ENCODE measurements at regions of chr4 and their contacts with region 1.

Region 1: GRCh38 chr4:145732895-145733880 is 53.2 kb downstream of the C4orf51 start:
- DNase-seq: peak; percentile 91
- H3K4me3 Mint-ChIP-seq: peak overlapping the region; percentile 69
- H3K27ac Mint-ChIP-seq: peak overlapping the region; percentile 98
- H3K4me1 Mint-ChIP-seq: peaks cover 41% of the 10 kb centered on the region
- H3K27me3 Mint-ChIP-seq: no peaks in the 10 kb centered on the region
- CTCF ChIP-seq: no peak

Region 2: DNA sequence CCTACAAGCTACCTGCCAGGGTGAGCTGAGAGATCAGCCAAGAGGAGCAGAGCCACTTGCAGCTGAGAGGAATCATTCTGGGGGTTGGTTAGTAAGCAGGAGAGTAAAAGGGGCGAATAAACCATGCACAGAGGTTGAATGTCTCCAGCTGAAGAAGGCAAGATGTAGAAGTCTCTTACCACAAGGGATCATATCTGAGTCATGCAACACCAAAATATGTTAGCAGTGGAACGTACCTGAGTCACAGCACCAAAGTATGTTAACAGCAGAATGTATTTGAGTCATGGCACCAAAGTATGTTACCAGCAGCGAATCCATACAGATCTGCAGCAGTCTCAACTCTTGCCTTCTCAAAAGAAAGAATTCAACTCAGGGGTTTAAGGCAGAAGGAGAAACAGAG is 23.3 kb before region 1 on chr4:
- CTCF ChIA-PET with region 1: no interaction called
- POLR2A ChIA-PET with region 1: interaction called, 16 read pairs
- intact Hi-C with region 1: no loop called
- DNase-seq: peak; percentile 83
- H3K4me3 Mint-ChIP-seq: no peak overlapping the region
- H3K27ac Mint-ChIP-seq: no peak overlapping the region
- H3K4me1 Mint-ChIP-seq: peaks cover 18% of the 10 kb centered on the region
- H3K27me3 Mint-ChIP-seq: no peaks in the 10 kb centered on the region
- CTCF ChIP-seq: no peak

Region 3: GRCh38 chr4:145808021-145808650 is 74.9 kb after region 1 on chr4:
- CTCF ChIA-PET with region 1: interaction called, 5 read pairs
- POLR2A ChIA-PET with region 1: interaction called, 54 read pairs
- intact Hi-C with region 1: loop called (anchors 1 kb)
- DNase-seq: peak; percentile 97
- H3K4me3 Mint-ChIP-seq: peak overlapping the region; percentile 41
- H3K27ac Mint-ChIP-seq: peak overlapping the region; percentile 95
- H3K4me1 Mint-ChIP-seq: peaks cover 32% of the 10 kb centered on the region
- H3K27me3 Mint-ChIP-seq: no peaks in the 10 kb centered on the region
- CTCF ChIP-seq: no peak

Region 4: DNA sequence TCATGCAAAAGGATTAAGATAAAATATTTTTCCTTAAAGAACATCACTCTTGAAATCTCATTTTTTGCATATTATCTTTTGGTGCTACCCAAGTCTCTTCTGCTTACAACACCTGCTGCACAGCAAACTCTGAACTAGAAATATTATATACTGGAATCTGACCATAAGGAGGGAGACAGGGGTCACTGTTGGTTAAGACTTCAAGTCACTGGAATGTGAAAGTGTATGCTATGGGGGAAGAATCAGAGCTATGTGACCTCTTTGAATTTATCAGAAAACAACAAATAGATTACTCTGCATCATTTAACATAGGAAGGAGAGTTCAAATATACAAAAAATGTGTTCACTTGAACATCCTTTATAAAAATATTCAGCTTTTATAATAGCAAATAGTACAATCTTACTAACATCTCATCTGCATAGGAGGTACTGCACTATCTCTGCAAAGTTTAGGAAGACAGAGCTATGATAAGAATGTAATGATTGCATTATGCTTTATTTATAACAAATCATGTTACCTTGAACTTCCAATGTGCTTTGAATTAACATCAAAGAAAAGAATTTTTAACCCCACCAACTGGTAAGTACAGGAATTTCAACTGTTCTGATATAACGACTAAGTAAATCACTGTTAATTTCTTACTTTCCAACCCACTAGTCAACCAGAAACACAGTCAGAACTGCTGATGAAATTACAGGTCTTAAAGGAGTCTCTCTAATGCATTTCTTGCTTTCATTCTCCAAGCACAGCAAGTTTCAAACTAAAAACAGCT is 135.6 kb after region 1 on chr4:
- CTCF ChIA-PET with region 1: no interaction called
- POLR2A ChIA-PET with region 1: no interaction called
- intact Hi-C with region 1: loop called (anchors 5 kb)
- DNase-seq: no peak
- H3K4me3 Mint-ChIP-seq: no peak overlapping the region
- H3K27ac Mint-ChIP-seq: no peak overlapping the region
- H3K4me1 Mint-ChIP-seq: peaks cover 6% of the 10 kb centered on the region
- H3K27me3 Mint-ChIP-seq: no peaks in the 10 kb centered on the region
- CTCF ChIP-seq: peak; percentile 18

Region 5: GRCh38 chr4:145887241-145887991 is 154.2 kb after region 1 on chr4:
- CTCF ChIA-PET with region 1: no interaction called
- POLR2A ChIA-PET with region 1: interaction called, 6 read pairs
- intact Hi-C with region 1: loop called (anchors 5 kb)
- DNase-seq: no peak
- H3K4me3 Mint-ChIP-seq: no peak overlapping the region
- H3K27ac Mint-ChIP-seq: no peak overlapping the region
- H3K4me1 Mint-ChIP-seq: peaks cover 2% of the 10 kb centered on the region
- H3K27me3 Mint-ChIP-seq: no peaks in the 10 kb centered on the region
- CTCF ChIP-seq: no peak

Region 6: DNA sequence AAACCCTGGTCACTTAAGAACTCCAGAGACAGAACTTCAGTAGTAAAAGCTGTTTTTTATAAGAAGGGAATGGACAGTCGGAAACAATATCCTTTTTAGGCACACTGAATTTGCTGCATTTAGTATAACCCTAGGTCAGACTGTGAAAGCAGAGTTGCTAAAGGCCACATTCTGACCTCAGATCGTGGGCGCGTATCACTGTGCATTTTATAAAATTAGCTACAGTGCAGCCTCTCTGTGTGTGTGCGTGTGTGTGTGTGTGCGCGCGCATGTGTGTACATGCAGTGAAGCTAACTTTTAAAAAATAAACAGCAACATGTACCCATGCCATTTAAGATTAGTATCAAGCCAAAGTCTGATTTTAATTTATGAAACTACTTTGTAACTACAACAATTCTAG is 197.4 kb after region 1 on chr4:
- CTCF ChIA-PET with region 1: no interaction called
- POLR2A ChIA-PET with region 1: interaction called, 12 read pairs
- intact Hi-C with region 1: no loop called
- DNase-seq: no peak
- H3K4me3 Mint-ChIP-seq: no peak overlapping the region
- H3K27ac Mint-ChIP-seq: no peak overlapping the region
- H3K4me1 Mint-ChIP-seq: peaks cover 18% of the 10 kb centered on the region
- H3K27me3 Mint-ChIP-seq: no peaks in the 10 kb centered on the region
- CTCF ChIP-seq: no peak

Region 7: GRCh38 chr4:145936142-145936996 is 203.2 kb after region 1 on chr4:
- CTCF ChIA-PET with region 1: interaction called, 3 read pairs
- POLR2A ChIA-PET with region 1: interaction called, 14 read pairs
- intact Hi-C with region 1: loop called (anchors 1 kb)
- DNase-seq: peak; percentile 70
- H3K4me3 Mint-ChIP-seq: peak overlapping the region; percentile 88
- H3K27ac Mint-ChIP-seq: peak overlapping the region; percentile 42
- H3K4me1 Mint-ChIP-seq: peaks cover 38% of the 10 kb centered on the region
- H3K27me3 Mint-ChIP-seq: no peaks in the 10 kb centered on the region
- CTCF ChIP-seq: peak; percentile 8

Measured in MCF 10A (cell line).